ENCODE measurements at regions of chr7 and their contacts with region 1.

Region 1: GRCh38 chr7:155808549-155809331 is 3.5 kb downstream of the SHH start:
- DNase-seq: peak; percentile 65
- ATAC-seq: peak; percentile 70
- H3K4me3 ChIP-seq: peak overlapping the region; percentile 63 to 90 (median 81)
- H3K27ac ChIP-seq: peak overlapping the region; percentile 92
- H3K4me1 ChIP-seq: peaks cover 54% of the 10 kb centered on the region
- H3K27me3 ChIP-seq: peaks cover 6 to 39% of the 10 kb centered on the region in 2 experiments; a peak in 4 of 5 replicates
- CTCF ChIP-seq: peak; percentile 9; the same call in 1 of the 2 replicates
- EP300 ChIP-seq: no peak
- POLR2A ChIP-seq: peak in 1 of 2 experiments; percentile 56; a peak in 2 of 4 replicates
- RAD21 ChIP-seq: no peak; the same call in none of the 2 replicates

Region 2: DNA sequence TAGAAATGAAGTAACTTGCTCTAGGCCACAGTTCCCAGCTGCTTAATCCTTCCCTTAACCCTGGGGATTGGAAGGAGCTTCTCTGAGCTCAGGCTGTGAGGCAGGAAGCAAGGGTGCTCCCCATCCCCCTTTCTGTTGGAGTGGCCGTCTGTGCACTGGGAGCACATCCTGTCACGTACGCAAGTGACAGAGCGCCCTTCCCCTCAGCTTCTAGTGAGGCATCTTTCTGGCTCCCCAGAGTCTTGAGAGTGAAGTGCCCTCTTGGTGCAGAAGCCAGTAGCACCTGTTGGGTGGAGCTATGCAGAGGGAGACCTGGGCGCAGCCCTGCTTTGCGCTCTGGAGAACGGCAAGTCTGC is 44.3 kb before region 1 on chr7:
- CTCF ChIA-PET with region 1: no interaction called
- POLR2A ChIA-PET with region 1: no interaction called
- in situ Hi-C with region 1: no loop called
- intact Hi-C with region 1: no loop called
- DNase-seq: no peak
- ATAC-seq: no peak
- H3K4me3 ChIP-seq: no peak overlapping the region
- H3K27ac ChIP-seq: no peak overlapping the region
- H3K4me1 ChIP-seq: no peaks in the 10 kb centered on the region
- H3K27me3 ChIP-seq: no peaks in the 10 kb centered on the region
- CTCF ChIP-seq: no peak
- EP300 ChIP-seq: no peak
- POLR2A ChIP-seq: no peak
- RAD21 ChIP-seq: no peak

Region 3: DNA sequence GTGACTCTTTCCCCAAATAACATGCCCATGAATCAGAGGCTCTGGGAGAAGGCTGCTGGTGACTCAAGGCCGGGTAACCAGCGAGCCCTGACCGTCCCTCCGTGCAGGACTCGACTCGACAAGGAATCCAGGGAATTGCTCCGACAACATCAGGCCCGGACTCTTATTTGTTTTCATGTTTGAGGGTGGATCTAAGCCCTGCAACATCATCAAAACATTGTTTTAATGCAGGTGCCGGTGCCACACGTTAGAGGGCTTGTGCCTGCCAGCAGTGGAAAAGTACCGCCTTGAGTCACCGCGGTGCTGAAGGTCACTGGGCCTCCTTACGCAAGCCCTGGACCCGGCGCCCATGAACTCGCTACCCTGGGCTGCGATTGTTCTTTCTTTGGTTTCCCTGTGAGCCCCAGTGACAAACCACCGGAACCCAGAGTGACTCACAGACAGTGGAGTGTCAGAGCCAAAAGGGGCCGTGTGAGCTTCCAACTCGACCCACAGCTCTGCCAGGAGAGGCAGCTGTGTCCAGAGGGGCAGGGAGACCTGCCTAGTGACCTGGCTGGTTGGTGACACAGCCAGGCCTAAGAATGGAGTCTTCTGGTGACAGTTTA is 142.9 kb after region 1 on chr7:
- CTCF ChIA-PET with region 1: no interaction called
- POLR2A ChIA-PET with region 1: interaction called, 12 read pairs
- in situ Hi-C with region 1: no loop called
- intact Hi-C with region 1: no loop called
- DNase-seq: peak; percentile 97
- ATAC-seq: peak; percentile 89
- H3K4me3 ChIP-seq: peak overlapping the region; percentile 38 to 70 (median 47); a peak in 5 of 6 replicates
- H3K27ac ChIP-seq: peak overlapping the region; percentile 88
- H3K4me1 ChIP-seq: peaks cover 60% of the 10 kb centered on the region
- H3K27me3 ChIP-seq: 0 out of 5 replicates have a peak, but pooled peaks cover 0 to 10% of the 10 kb centered on the region in 2 experiments
- CTCF ChIP-seq: no peak; the same call in 1 of the 2 replicates
- EP300 ChIP-seq: peak; percentile 87 to 95
- POLR2A ChIP-seq: peak; percentile 80 to 92; a peak in 3 of 4 replicates
- RAD21 ChIP-seq: peak; percentile 9; the same call in 1 of the 2 replicates

Region 4: DNA sequence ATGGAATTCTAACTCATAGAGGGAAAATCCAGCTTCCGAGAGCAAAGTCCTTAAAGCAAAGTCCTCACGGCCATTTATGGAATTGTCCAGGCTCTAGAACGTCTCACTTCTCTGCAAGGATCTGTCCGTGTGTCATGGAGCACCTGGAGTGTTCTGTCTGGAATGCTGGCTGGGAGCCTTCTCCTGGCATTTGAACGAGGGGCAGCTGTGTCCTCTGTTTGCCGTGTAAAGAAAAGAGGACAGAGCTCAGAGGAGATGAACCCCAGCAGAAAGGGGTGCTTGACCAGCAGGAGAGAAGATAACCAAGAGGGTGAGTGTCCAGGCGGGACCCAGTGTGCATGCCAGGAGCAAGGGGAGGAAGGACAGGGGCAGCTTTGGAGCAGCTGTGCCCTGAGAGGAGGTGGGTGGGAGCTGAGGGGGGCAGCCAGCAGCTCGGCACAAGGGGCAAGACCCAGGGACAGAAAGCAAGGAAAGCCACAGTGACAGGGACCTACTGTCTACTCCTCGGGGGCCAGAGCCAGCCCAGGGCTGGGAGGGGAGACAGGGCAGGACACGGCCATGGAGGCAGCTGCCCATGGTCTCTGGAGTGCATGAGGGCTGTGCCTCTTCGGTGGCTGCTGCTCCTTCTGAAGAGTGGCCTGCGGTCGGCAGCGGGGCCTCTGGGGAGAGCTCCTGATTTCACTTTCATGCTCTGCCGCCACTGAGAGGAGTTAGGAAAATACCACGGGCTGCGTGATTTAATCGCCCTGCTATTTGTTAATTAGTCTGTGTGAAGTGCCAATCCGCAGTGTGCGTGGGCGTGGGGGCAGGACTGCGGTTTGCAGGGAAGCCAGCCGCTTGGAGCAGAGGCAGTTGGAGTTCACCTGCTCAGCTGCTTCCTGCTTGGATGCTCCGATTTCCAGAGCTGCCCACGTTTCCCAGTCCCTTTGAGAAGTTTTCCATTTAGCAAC is 152.8 kb after region 1 on chr7:
- CTCF ChIA-PET with region 1: no interaction called
- POLR2A ChIA-PET with region 1: interaction called, 23 read pairs
- in situ Hi-C with region 1: loop called (anchors 10 kb)
- intact Hi-C with region 1: no loop called
- DNase-seq: peak; percentile 61
- ATAC-seq: peak; percentile 79
- H3K4me3 ChIP-seq: peak overlapping the region; percentile 72 to 84 (median 78)
- H3K27ac ChIP-seq: peak overlapping the region; percentile 66
- H3K4me1 ChIP-seq: peaks cover 45% of the 10 kb centered on the region
- H3K27me3 ChIP-seq: no peaks in the 10 kb centered on the region; a peak in 1 of 5 replicates
- CTCF ChIP-seq: no peak
- EP300 ChIP-seq: 0 out of 4 replicates have a peak, but pooled peaks of 1 of the 2 experiments have one; percentile 25
- POLR2A ChIP-seq: peak; percentile 50 to 65; a peak in 3 of 4 replicates
- RAD21 ChIP-seq: no peak

Region 5: GRCh38 chr7:156082048-156083040 is 273.6 kb after region 1 on chr7:
- CTCF ChIA-PET with region 1: no interaction called
- POLR2A ChIA-PET with region 1: no interaction called
- in situ Hi-C with region 1: no loop called
- intact Hi-C with region 1: no loop called
- DNase-seq: no peak
- ATAC-seq: no peak
- H3K4me3 ChIP-seq: no peak overlapping the region
- H3K27ac ChIP-seq: no peak overlapping the region
- H3K4me1 ChIP-seq: no peaks in the 10 kb centered on the region
- H3K27me3 ChIP-seq: peaks cover 1 to 44% of the 10 kb centered on the region in 2 experiments; a peak in 2 of 5 replicates
- CTCF ChIP-seq: no peak
- EP300 ChIP-seq: no peak
- POLR2A ChIP-seq: no peak
- RAD21 ChIP-seq: no peak

Region 6: DNA sequence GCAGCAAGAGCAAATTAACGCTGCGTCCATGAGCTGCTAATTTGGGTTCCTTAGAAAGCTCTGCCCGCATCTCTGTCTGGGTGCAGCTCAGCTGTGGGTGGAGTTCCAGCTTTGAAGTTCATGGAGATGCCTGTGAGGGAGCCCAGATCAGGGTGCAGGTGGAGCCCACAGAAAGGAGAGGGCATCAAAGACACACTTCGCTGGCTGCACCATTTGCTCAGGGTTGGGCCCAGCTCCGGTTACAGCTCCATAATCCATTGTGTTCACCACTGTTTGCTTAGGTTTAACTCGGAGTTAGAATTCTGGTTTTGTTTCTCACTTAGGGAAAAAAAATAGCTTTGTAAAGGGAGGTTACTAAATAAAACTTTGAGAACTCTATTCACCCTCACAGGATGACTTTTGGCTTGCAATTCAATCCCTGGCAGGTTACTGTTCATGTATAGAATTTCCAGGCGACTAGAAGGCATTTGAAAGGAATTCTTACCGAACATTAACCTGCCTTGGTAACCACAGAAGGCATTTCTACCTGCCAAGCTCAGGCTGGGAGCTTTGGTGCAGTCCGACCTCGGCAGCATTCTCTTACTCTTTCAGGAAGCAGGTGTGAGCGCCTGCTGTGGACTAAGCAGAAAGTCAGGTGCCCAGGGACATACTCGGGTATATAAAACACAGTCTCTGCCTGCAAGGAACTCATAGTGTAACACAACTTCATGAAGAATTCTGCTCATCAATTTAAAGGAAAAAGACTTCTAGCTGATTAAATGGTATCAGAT is 652.3 kb after region 1 on chr7:
- CTCF ChIA-PET with region 1: no interaction called
- POLR2A ChIA-PET with region 1: interaction called, 3 read pairs
- in situ Hi-C with region 1: loop called (anchors 5 kb)
- intact Hi-C with region 1: no loop called
- DNase-seq: peak; percentile 59
- ATAC-seq: peak; percentile 82
- H3K4me3 ChIP-seq: 0 out of 6 replicates have a peak overlapping the region, but pooled peaks of 1 of the 3 experiments have one; percentile 24
- H3K27ac ChIP-seq: no peak overlapping the region
- H3K4me1 ChIP-seq: peaks cover 38% of the 10 kb centered on the region
- H3K27me3 ChIP-seq: peaks cover 1 to 45% of the 10 kb centered on the region in 2 experiments; a peak in 3 of 5 replicates
- CTCF ChIP-seq: no peak
- EP300 ChIP-seq: no peak
- POLR2A ChIP-seq: no peak
- RAD21 ChIP-seq: no peak

Region 7: GRCh38 chr7:156473476-156474240 is 664.9 kb after region 1 on chr7:
- CTCF ChIA-PET with region 1: no interaction called
- POLR2A ChIA-PET with region 1: interaction called, 4 read pairs
- in situ Hi-C with region 1: no loop called
- intact Hi-C with region 1: loop called (anchors 5 kb)
- DNase-seq: peak; percentile 25
- ATAC-seq: peak; percentile 72
- H3K4me3 ChIP-seq: peak overlapping the region in 2 of 3 experiments; percentile 25 to 32; a peak in 3 of 6 replicates
- H3K27ac ChIP-seq: peak overlapping the region; percentile 54
- H3K4me1 ChIP-seq: peaks cover 34% of the 10 kb centered on the region
- H3K27me3 ChIP-seq: no peaks in the 10 kb centered on the region
- CTCF ChIP-seq: peak; percentile 80
- EP300 ChIP-seq: no peak
- POLR2A ChIP-seq: no peak
- RAD21 ChIP-seq: peak; percentile 70; the same call in 1 of the 2 replicates

Region 8: DNA sequence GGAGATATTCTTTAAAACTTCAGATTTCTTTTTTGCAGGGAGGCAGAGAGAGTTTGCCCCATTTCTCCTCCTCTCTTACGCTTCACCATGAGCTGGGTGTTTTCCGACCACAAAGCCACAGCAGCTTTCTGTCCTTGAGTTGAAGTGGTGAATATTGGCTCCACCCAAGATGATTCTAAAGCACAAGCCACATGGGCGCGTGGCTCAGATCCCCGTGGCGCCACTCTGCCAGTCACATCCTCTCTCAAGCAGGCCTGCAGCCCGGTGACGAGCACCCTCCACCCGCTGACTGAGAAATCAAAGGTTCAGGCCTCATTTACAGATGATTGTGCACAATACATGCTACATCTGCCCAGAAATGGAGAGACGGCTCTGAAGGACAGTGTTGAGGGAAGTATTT is 804.2 kb after region 1 on chr7:
- CTCF ChIA-PET with region 1: no interaction called
- POLR2A ChIA-PET with region 1: interaction called, 17 read pairs
- in situ Hi-C with region 1: no loop called
- intact Hi-C with region 1: no loop called
- DNase-seq: no peak
- ATAC-seq: no peak
- H3K4me3 ChIP-seq: no peak overlapping the region
- H3K27ac ChIP-seq: peak overlapping the region; percentile 100
- H3K4me1 ChIP-seq: peaks cover 86% of the 10 kb centered on the region
- H3K27me3 ChIP-seq: no peaks in the 10 kb centered on the region
- CTCF ChIP-seq: no peak
- EP300 ChIP-seq: no peak
- POLR2A ChIP-seq: no peak
- RAD21 ChIP-seq: no peak

Region 9: GRCh38 chr7:156816943-156817572 is 1008.3 kb after region 1 on chr7:
- CTCF ChIA-PET with region 1: no interaction called
- POLR2A ChIA-PET with region 1: no interaction called
- in situ Hi-C with region 1: no loop called
- intact Hi-C with region 1: loop called (anchors 5 kb)
- DNase-seq: peak; percentile 10
- ATAC-seq: no peak
- H3K4me3 ChIP-seq: no peak overlapping the region
- H3K27ac ChIP-seq: no peak overlapping the region
- H3K4me1 ChIP-seq: peaks cover 21% of the 10 kb centered on the region
- H3K27me3 ChIP-seq: no peaks in the 10 kb centered on the region
- CTCF ChIP-seq: peak; percentile 41
- EP300 ChIP-seq: no peak
- POLR2A ChIP-seq: no peak
- RAD21 ChIP-seq: no peak

Measured in HepG2 (cell line).